Activated naive CD4-positive, alpha-beta T cell treated with anti-CD3 and anti-CD28 coated beads for 36 hours (primary cell): ENCODE measurements at regions of chr21 and their contacts with region 1.

Region 1: DNA sequence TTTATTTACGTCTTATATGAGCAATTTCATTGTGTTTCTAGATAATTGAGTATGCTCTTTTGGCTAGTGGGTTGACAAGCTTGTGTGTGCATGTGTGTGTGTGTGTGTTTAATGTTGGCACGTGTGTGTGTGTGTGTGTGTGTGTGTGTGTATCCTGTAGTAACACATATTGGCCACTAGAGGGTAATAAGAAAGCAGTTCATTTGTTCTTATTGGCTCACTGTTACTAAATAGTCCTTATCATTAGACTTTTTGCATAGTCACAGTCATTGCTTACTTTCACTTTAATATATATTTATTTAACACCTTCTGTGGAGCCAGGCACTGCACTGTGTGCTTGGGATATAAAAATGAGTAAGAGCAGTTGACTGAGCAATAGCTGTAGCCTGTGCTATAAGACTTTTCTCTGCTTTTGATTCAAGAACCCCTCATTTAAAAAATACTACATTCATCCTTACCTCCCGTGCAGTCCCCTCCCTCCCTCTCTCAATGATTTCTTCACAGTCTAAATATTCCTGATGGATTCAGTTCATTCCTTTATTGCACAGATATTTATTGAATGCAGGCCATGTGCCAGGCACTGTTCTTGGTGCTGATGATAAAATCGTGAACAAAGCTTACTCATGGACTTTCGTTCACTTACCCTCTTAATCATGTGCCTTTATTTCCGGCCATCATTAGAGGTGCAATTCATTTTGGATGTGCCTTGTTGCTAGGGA is 96.7 kb downstream of the DYRK1A start:
- DNase-seq: peak; percentile 35
- H3K4me3 Mint-ChIP-seq: no peak overlapping the region
- H3K27ac Mint-ChIP-seq: peak overlapping the region; percentile 46
- H3K4me1 Mint-ChIP-seq: peaks cover 71% of the 10 kb centered on the region
- H3K27me3 Mint-ChIP-seq: no peaks in the 10 kb centered on the region

Region 2: GRCh38 chr21:37407719-37408420 is 55.4 kb before region 1 on chr21:
- CTCF ChIA-PET with region 1: interaction called, 6 read pairs
- intact Hi-C with region 1: loop called (anchors 2 kb)
- DNase-seq: no peak
- H3K4me3 Mint-ChIP-seq: peak overlapping the region; percentile 19
- H3K27ac Mint-ChIP-seq: peak overlapping the region; percentile 58
- H3K4me1 Mint-ChIP-seq: peaks cover 81% of the 10 kb centered on the region
- H3K27me3 Mint-ChIP-seq: no peaks in the 10 kb centered on the region

Region 3: GRCh38 chr21:37503848-37504467 is 40.7 kb after region 1 on chr21:
- CTCF ChIA-PET with region 1: interaction called, 3 read pairs
- intact Hi-C with region 1: loop called (anchors 5 kb)
- DNase-seq: peak; percentile 50
- H3K4me3 Mint-ChIP-seq: peak overlapping the region; percentile 5
- H3K27ac Mint-ChIP-seq: peak overlapping the region; percentile 88
- H3K4me1 Mint-ChIP-seq: peaks cover 26% of the 10 kb centered on the region
- H3K27me3 Mint-ChIP-seq: no peaks in the 10 kb centered on the region

Region 4: GRCh38 chr21:37563641-37564340 is 100.5 kb after region 1 on chr21:
- CTCF ChIA-PET with region 1: no interaction called
- intact Hi-C with region 1: loop called (anchors 1 kb)
- DNase-seq: peak; percentile 92
- H3K4me3 Mint-ChIP-seq: peak overlapping the region; percentile 88
- H3K27ac Mint-ChIP-seq: peak overlapping the region; percentile 99
- H3K4me1 Mint-ChIP-seq: peaks cover 20% of the 10 kb centered on the region
- H3K27me3 Mint-ChIP-seq: no peaks in the 10 kb centered on the region

Region 5: GRCh38 chr21:37642493-37642892 is 179.3 kb after region 1 on chr21:
- CTCF ChIA-PET with region 1: no interaction called
- intact Hi-C with region 1: loop called (anchors 1 kb)
- DNase-seq: peak; percentile 66
- H3K4me3 Mint-ChIP-seq: no peak overlapping the region
- H3K27ac Mint-ChIP-seq: no peak overlapping the region
- H3K4me1 Mint-ChIP-seq: peaks cover 2% of the 10 kb centered on the region
- H3K27me3 Mint-ChIP-seq: peaks cover 19% of the 10 kb centered on the region